Adrenal gland (tissue), 19 donors: ENCODE measurements at regions of chr10 and their contacts with region 1.

Region 1: DNA sequence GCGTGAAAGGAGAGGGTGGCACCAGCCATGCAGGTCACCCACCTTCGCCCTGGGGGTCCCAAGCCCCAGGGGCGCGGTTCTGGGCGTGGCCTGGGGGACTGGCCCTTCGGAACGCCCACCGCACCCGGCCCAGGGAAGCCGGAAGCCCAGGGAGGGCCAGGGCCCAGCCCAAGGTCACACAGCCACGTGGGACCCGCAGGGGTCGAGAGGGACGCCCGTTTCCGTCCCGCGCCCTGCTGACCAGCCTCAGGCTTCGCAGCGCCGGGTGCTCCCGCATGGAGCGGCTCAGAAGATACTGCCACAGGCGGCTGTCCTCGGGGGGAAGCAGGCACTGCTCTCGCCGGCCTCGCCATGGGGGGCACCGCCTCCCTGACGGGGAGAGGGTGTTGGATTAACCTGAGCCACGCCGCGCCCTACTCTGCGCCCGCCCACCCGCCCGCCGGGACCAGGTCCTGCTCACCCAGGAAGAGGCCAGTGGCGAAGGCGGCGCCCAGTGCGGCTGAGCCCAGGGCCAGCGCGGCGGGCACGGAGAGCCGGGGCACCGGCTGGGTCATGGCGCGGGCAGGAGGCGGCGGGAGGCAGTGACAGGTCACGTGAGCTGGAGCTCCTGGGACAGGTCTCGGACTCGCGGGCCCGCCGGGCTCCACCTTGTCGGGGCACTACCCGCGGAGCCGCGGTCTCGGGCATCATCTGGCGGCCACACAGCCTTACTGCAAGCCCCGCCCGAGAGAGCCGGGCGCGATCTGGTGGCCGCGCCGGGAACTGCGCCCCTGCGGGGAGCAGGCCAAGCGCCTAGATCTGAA is at the start of gene COMTD1:
- DNase-seq: peak; percentile 95 to 98 (median 96)
- H3K4me3 ChIP-seq: peak within 1 kb of the TSS; percentile 18 to 83 (median 52)
- H3K27ac ChIP-seq: peak within 1 kb of the TSS; percentile 13 to 88 (median 63)
- H3K4me1 ChIP-seq: peaks cover 7 to 17% of the 10 kb centered on the region in 2 donors
- H3K27me3 ChIP-seq: no peaks in the 10 kb centered on the region
- CTCF ChIP-seq: peak; percentile 100
- POLR2A ChIP-seq: peak; percentile 36 to 47
- total RNA-seq, gene COMTD1: 14.7 to 82.0 (median 30.6) TPM

Region 2: GRCh38 chr10:74244097-74244685 is 991.4 kb before region 1 on chr10:
- intact Hi-C with region 1: loop called (anchors 10 kb)
- DNase-seq: peak in 2 of 7 donors; percentile 42 to 51
- H3K4me3 ChIP-seq: no peak overlapping the region
- H3K27ac ChIP-seq: no peak overlapping the region
- H3K4me1 ChIP-seq: no peaks in the 10 kb centered on the region
- H3K27me3 ChIP-seq: no peaks in the 10 kb centered on the region
- CTCF ChIP-seq: peak; percentile 44 to 72 (median 53)
- POLR2A ChIP-seq: no peak

Region 3: DNA sequence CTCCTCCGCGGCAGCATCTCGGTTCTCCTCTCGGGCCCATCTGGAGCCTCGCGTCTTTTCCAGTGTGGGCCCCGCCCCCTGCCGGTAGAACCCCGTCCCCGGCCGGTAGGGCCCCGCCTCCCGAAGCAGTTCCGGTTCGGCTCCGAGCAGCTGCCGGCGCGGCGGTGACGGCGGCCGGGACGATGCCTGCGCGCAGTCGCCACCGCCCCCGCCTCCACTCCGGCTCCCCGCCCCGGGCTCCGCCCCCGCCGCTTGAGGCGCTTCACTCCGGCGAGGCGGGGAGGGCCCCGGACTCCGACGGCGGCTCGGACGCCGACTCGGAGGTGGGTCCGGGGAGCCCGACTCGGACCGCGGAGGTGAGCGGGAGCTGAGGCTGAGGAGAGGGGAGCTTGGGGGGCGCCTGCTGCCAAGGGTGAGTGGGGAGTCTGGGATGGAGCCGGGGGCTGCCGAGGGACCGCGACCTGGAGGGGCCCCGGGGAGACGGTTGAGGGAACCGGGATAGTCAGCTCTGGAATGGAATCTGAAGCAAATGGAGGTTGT is 124.1 kb before region 1 on chr10 and contains the start of gene SAMD8:
- intact Hi-C with region 1: loop called (anchors 5 to 10 kb)
- DNase-seq: peak; percentile 95 to 99 (median 98)
- H3K4me3 ChIP-seq: peak within 1 kb of the TSS; percentile 51 to 99 (median 81)
- H3K27ac ChIP-seq: peak within 1 kb of the TSS; percentile 94 to 98 (median 97)
- H3K4me1 ChIP-seq: peaks cover 7 to 47% of the 10 kb centered on the region in 2 donors
- H3K27me3 ChIP-seq: no peaks in the 10 kb centered on the region
- CTCF ChIP-seq: peak; percentile 19 to 63 (median 40)
- POLR2A ChIP-seq: peak; percentile 72 to 88
- total RNA-seq, gene SAMD8: 23.9 to 48.7 (median 32.6) TPM

Region 4: GRCh38 chr10:75187961-75188426 is 47.6 kb before region 1 on chr10:
- intact Hi-C with region 1: loop called in 1 of 2 experiments (anchors 5 kb)
- DNase-seq: peak in 6 of 7 donors; percentile 53 to 79 (median 72)
- H3K4me3 ChIP-seq: no peak overlapping the region
- H3K27ac ChIP-seq: peak overlapping the region in 2 of 5 donors; percentile 2 to 68
- H3K4me1 ChIP-seq: peaks cover 8 to 19% of the 10 kb centered on the region in 2 donors
- H3K27me3 ChIP-seq: no peaks in the 10 kb centered on the region
- CTCF ChIP-seq: peak; percentile 47 to 76 (median 68)
- POLR2A ChIP-seq: no peak